ENCODE measurements at regions of chr1 and their contacts with region 1.

Region 1: DNA sequence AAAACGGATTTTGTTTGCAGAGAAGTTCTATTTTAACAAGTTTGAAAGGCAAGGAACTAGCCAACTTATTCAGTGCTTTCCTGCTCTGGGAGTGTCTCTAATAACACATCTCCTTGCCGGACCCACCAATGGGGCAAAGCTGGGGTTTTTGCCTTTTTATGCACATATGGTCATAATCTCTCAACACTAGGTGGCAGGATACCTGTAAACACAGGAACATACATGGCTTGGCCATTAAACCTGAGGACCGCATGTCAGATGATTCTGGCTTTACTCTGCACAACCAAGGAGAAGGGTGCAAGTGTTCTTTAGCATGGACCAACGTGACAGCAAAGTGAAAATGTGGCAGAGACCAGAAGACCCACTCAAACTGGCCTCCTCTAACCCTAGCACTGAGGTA is 4.9 kb downstream of the TMEM9 start:
- DNase-seq: no peak
- ATAC-seq: peak in 2 of 4 donors; percentile 23 to 32
- H3K4me3 ChIP-seq: no peak overlapping the region
- H3K27ac ChIP-seq: no peak overlapping the region
- H3K4me1 ChIP-seq: peaks cover 0 to 8% (median 7%) of the 10 kb centered on the region in 3 donors
- H3K27me3 ChIP-seq: no peaks in the 10 kb centered on the region
- CTCF ChIP-seq: peak in 3 of 4 donors; percentile 10 to 37 (median 36)

Region 2: DNA sequence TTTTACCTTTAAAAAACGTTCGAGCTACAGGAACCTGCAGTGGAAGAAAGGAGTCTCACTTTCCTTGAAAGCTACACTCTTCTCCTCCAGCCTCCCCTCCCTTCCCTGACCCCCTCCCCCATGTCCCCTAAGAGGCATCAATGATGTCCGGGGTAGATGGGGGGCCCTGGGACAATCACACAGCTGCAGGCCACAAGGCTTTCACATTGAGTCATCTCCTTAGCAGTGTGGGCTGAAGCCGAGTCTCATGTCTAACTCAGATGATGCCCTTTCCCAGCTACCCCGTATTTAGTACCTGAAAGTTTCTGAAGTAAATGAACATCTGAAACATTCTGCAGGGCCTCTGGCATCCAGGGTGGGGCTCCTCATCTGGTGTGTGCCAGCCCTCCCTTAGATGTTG is 282.9 kb before region 1 on chr1:
- intact Hi-C with region 1: no loop called
- DNase-seq: no peak
- ATAC-seq: peak in 1 of 4 donors; percentile 34
- H3K4me3 ChIP-seq: no peak overlapping the region
- H3K27ac ChIP-seq: no peak overlapping the region
- H3K4me1 ChIP-seq: no peaks in the 10 kb centered on the region
- H3K27me3 ChIP-seq: no peaks in the 10 kb centered on the region
- CTCF ChIP-seq: no peak

Region 3: DNA sequence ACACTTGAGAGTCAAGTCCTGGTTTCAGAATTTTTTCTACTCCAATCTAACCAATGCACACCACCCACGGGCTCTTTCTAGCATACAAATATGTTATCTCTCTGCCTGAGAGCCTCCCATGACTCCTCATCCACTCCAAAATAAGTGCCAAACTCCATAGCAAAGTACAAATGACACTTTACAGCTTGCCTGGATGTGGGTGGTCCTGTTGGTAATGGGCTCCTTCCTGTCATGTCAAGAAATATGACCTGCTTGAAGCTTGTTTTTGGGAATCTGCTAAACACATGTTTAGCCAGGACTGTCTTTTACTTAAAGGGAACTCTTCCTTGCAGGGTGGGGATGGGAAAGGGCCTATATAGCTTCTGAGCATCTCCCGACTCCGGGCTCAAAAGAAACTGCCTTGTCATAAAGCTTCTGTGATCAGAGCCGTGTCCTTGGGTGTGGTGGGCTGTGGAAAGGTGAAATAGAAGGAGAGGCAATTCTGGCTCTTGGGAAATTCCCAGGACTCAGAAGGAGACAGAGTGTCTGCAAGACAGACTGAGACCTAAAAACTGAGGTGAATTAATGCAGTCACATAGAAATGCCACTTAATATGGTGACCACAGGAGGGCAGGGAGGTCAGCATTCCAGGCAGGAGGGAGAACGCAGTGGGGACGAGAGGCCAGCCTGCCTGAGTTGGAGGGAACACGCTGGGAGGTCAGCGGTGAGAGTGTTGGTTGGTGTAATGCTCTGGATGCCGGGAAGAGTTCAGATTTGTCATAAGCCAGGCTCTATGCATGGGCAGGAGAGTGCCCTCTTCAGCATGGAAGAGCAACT is 35.1 kb after region 1 on chr1:
- intact Hi-C with region 1: loop called in 1 of 3 experiments (anchors 5 kb)
- DNase-seq: peak in 3 of 6 donors; percentile 35 to 56 (median 55)
- ATAC-seq: peak; percentile 79 to 99 (median 92)
- H3K4me3 ChIP-seq: no peak overlapping the region
- H3K27ac ChIP-seq: no peak overlapping the region
- H3K4me1 ChIP-seq: no peaks in the 10 kb centered on the region
- H3K27me3 ChIP-seq: no peaks in the 10 kb centered on the region
- CTCF ChIP-seq: peak in 2 of 4 donors; percentile 37 to 49

Region 4: GRCh38 chr1:201216395-201217085 is 67.1 kb after region 1 on chr1:
- intact Hi-C with region 1: loop called in 1 of 3 experiments (anchors 5 kb)
- DNase-seq: peak in 2 of 6 donors; percentile 6 to 38
- ATAC-seq: no peak
- H3K4me3 ChIP-seq: no peak overlapping the region
- H3K27ac ChIP-seq: no peak overlapping the region
- H3K4me1 ChIP-seq: no peaks in the 10 kb centered on the region
- H3K27me3 ChIP-seq: no peaks in the 10 kb centered on the region
- CTCF ChIP-seq: no peak

Measured in pancreas (tissue), 10 donors.